ENCODE measurements at regions of chr7 and their contacts with region 1.

Region 1: GRCh38 chr7:30938435-30939316 is 25.1 kb upstream of the GHRHR start:
- DNase-seq: no peak
- H3K4me3 ChIP-seq: no peak overlapping the region
- H3K27me3 ChIP-seq: peaks cover 13% of the 10 kb centered on the region
- CTCF ChIP-seq: peak; percentile 99

Region 2: GRCh38 chr7:30851651-30852307 is 86.9 kb before region 1 on chr7:
- CTCF ChIA-PET with region 1: interaction called, 12 read pairs
- POLR2A ChIA-PET with region 1: no interaction called
- DNase-seq: peak; percentile 57
- H3K4me3 ChIP-seq: no peak overlapping the region
- H3K27me3 ChIP-seq: no peaks in the 10 kb centered on the region
- CTCF ChIP-seq: 0 out of 2 replicates have a peak, but pooled peaks have one; percentile 4

Region 3: DNA sequence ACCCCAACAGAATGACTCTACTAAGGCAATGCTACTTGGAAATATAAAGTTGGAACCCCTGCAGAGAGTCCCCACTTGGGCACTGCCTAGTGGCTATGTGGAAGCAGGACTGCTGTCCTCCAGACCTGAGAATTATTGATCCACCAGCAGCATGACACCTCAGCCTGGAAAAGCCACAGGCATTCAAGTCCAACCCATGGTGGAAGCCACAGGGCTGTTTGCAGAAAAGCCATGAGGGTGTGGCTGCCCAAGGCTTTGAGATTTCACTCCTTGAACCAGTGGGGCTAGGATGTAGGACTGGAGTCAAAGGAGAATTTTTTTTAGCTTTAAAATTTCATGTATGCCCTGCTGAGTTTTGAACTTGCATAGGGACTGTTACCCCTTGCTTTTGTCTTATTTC is 11.5 kb after region 1 on chr7:
- CTCF ChIA-PET with region 1: interaction called, 19 read pairs
- POLR2A ChIA-PET with region 1: no interaction called
- DNase-seq: no peak
- H3K4me3 ChIP-seq: no peak overlapping the region
- H3K27me3 ChIP-seq: peaks cover 6% of the 10 kb centered on the region
- CTCF ChIP-seq: no peak

Region 4: DNA sequence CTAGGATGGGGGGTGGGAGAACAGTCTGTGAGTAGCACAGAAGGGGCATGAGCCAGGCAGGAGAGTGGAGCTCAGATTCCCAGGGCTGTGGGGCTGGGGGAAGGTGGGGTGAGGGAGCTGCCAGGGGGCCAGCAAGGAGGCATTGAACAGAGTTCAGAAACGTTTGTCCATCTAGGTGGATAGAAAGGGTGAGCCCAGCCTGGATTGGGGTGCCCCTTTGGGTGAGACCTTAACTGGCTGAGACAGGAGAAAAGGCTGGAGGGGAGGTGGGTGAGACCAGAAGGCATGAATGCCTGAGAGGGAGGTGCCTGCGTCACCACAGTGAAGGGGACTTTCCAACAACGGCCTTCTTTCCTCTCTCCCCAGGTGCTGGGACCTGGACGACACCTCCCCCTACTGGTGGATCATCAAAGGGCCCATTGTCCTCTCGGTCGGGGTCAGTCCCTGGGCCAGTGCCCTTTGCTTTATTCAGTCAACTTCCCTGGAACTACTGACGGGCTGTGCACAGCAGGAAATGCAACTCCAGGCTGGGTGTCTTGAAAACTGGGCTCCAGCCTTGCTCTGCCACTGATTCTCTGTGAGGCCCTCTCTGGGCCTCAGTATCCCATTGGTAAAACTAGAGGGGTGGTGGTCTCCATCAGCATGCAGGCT is 36.1 kb after region 1 on chr7:
- CTCF ChIA-PET with region 1: interaction called, 16 read pairs
- POLR2A ChIA-PET with region 1: no interaction called
- DNase-seq: no peak
- H3K4me3 ChIP-seq: no peak overlapping the region
- H3K27me3 ChIP-seq: peaks cover 19% of the 10 kb centered on the region
- CTCF ChIP-seq: peak; percentile 74

Measured in BJ (cell line).